Heart left ventricle (tissue), 16 donors: ENCODE measurements at regions of chr7 and their contacts with region 1.

Region 1: GRCh38 chr7:16695621-16696237 is 49.7 kb downstream of the BZW2 start:
- DNase-seq: peak in 1 of 5 donors; percentile 16
- ATAC-seq: peak; percentile 26 to 88 (median 73)
- H3K4me3 ChIP-seq: no peak overlapping the region
- H3K27ac ChIP-seq: no peak overlapping the region
- H3K4me1 ChIP-seq: peaks cover 0 to 3% (median 0%) of the 10 kb centered on the region in 12 donors
- H3K27me3 ChIP-seq: no peaks in the 10 kb centered on the region
- CTCF ChIP-seq: peak; percentile 33 to 69 (median 56)
- POLR2A ChIP-seq: no peak

Region 2: GRCh38 chr7:16609842-16610450 is 85.8 kb before region 1 on chr7:
- intact Hi-C with region 1: loop called in 1 of 10 experiments (anchors 5 kb)
- DNase-seq: no peak
- ATAC-seq: no peak
- H3K4me3 ChIP-seq: no peak overlapping the region
- H3K27ac ChIP-seq: no peak overlapping the region
- H3K4me1 ChIP-seq: no peaks in the 10 kb centered on the region
- H3K27me3 ChIP-seq: no peaks in the 10 kb centered on the region
- CTCF ChIP-seq: no peak
- POLR2A ChIP-seq: no peak

Region 3: DNA sequence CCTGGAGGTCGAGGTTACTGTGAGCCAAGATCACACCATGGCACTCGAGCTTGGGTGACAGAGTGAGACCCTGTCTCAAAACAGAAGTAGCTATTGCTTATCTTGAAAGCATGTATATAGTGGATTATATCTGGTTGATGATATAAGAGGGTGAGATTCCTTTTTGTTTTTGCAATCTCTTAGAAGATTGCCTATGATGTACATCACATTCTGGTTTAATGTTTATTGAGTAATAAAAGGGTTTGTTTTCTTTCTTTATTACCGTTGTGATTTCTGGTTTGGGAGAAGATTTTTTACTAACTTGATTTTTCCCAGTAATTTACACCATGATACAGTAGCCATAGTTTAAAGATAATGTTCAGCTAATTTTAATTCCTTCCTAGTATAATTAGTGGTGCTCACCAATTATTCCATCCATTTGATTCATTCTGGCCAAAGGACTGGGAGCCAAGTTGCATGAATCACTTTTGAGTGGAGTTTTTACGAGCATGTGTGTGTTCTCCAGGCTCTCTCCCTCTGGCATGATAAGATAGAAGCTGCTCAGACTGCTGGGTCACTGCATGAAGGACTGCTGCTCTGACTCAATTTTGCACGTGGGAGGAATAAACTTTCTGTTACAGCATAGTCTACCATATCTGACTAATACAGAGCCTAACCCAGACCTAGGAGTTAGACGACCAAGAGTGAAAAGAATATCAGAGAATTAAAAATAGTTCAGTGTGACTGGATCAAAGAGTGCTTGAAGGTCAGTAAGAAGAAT is 44.3 kb after region 1 on chr7:
- intact Hi-C with region 1: loop called in 1 of 10 experiments (anchors 2 kb)
- DNase-seq: peak in 4 of 5 donors; percentile 26 to 70 (median 47)
- ATAC-seq: peak; percentile 88 to 99 (median 96)
- H3K4me3 ChIP-seq: no peak overlapping the region
- H3K27ac ChIP-seq: peak overlapping the region in 10 of 12 donors; percentile 39 to 74 (median 63)
- H3K4me1 ChIP-seq: peaks cover 0 to 41% (median 18%) of the 10 kb centered on the region in 12 donors
- H3K27me3 ChIP-seq: no peaks in the 10 kb centered on the region
- CTCF ChIP-seq: no peak
- POLR2A ChIP-seq: no peak

Region 4: DNA sequence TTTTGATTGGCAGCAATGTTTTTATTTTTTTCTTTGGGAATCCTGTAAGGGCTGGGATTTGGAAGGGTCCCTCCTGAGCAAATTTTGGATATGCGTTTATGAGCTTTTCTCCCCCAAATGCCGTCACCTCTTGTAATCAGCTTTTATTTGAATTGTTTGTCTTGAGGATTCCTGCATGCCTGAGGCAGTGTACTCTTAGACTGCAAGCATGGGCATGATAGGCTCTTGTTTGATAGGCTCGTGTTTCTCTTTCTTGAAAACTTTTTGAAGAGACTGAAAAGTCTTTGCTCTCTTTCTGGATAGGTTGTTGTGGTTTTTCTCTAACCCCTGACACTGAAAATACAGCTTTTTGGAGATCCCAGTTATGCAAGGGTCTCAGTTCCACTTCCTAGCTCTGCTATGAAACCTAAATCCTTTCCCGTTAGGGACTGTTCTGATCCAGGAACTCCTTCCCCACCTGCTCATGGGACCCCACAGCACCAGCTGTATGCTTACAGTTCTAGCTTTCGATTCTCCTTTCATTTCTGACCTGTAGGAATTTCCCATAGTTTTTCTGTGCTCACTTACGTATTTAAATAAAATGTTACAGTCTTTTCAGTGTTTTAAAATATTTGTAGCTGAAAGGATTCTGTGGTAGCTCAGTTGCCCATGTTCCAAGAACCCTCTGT is 75.1 kb after region 1 on chr7:
- intact Hi-C with region 1: loop called in 1 of 10 experiments (anchors 10 kb)
- DNase-seq: no peak
- ATAC-seq: no peak
- H3K4me3 ChIP-seq: peak overlapping the region in 1 of 12 donors; percentile 4
- H3K27ac ChIP-seq: no peak overlapping the region
- H3K4me1 ChIP-seq: peaks cover 0 to 14% (median 4%) of the 10 kb centered on the region in 12 donors
- H3K27me3 ChIP-seq: no peaks in the 10 kb centered on the region
- CTCF ChIP-seq: no peak
- POLR2A ChIP-seq: no peak

Region 5: DNA sequence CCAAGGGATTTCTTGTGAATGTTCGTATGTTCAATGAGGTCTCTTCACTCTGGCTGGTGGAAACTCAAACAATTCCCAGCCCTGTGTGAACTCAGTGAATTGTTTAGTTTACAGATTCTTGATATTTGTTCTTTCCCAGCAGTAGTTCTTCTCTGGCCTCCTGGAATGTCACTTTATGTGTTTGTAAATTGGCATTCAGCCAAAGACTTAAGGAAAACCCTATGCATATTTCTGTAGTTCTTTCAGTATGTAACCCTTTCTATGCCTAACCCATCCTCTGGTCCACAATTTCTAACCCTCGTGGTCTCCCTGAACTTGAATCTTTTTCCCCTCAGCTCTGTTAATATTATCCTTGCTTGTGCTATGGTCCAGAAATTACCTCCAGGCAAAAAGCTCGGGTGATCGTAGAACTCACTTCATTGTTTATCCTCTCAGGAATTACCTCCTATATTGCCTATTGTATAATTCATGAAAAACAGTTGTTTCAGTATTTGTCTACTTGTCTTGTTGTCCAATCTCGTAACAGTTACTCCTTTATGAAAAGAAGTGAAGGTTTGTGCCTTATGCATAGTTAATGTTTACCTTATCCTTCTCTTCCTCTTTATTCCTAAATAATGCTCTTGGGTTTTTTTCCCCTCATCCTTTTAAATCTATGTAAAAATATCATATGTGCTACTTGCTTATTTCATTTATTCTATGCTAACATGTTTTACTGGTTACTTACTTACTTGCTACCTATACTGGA is 209.7 kb after region 1 on chr7:
- intact Hi-C with region 1: no loop called
- DNase-seq: no peak
- ATAC-seq: no peak
- H3K4me3 ChIP-seq: no peak overlapping the region
- H3K27ac ChIP-seq: no peak overlapping the region
- H3K4me1 ChIP-seq: no peaks in the 10 kb centered on the region
- H3K27me3 ChIP-seq: no peaks in the 10 kb centered on the region
- CTCF ChIP-seq: no peak
- POLR2A ChIP-seq: no peak